CD4-positive, alpha-beta memory T cell (primary cell): ENCODE measurements at regions of chr17 and their contacts with region 1.

Region 1: DNA sequence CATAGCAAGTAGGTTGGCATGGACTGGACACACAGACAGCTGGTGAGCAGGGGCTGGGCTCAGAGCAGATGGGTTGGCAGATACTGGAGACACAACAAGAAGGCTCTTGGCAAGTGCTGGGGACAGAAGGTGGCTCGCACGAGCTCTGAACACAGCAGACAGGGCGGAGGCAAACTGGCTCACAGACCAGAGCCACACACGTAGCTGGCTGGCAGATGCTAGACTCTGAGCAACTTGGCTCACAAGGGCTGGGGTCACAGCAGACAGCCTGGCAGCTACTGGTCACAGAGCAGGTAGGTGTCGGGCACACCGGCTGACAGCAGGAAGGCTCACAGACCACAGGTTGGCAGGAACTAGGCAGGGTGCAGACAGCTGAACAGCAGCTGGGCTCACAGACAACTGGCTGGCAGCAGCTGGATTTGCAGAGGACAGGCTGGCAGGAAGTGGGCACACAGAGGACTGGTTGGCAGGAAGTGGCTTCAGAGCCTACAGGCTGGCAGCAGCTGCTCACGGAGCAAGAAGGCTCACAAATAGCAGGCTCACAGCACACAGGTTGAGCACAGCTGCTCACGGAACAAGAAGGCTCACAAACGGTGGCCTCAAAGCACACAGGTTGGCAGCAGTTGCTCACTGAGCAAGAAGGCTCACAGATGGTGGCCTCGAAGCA is 725 bp downstream of the KRTAP16-1 start:
- DNase-seq: peak; percentile 88 to 95 (median 92)
- H3K4me3 ChIP-seq: peak overlapping the region in 1 of 2 donors; percentile 41
- H3K4me3 Mint-ChIP-seq: peak overlapping the region; percentile 65 to 82 (median 78)
- H3K27ac ChIP-seq: peak overlapping the region; percentile 62
- H3K27ac Mint-ChIP-seq: peak overlapping the region; percentile 96 to 98 (median 97)
- H3K4me1 ChIP-seq: peaks cover 59% of the 10 kb centered on the region
- H3K4me1 Mint-ChIP-seq: peaks cover 54 to 63% (median 58%) of the 10 kb centered on the region in 4 donors
- H3K27me3 ChIP-seq: no peaks in the 10 kb centered on the region
- H3K27me3 Mint-ChIP-seq: no peaks in the 10 kb centered on the region

Region 2: GRCh38 chr17:41116297-41116696 is 192.1 kb before region 1 on chr17:
- CTCF ChIA-PET with region 1: interaction called, 6 read pairs
- POLR2A ChIA-PET with region 1: interaction called, 11 read pairs
- intact Hi-C with region 1: no loop called
- DNase-seq: no peak
- H3K4me3 ChIP-seq: no peak overlapping the region
- H3K4me3 Mint-ChIP-seq: no peak overlapping the region
- H3K27ac ChIP-seq: no peak overlapping the region
- H3K27ac Mint-ChIP-seq: peak overlapping the region in 1 of 7 donors; percentile 79
- H3K4me1 ChIP-seq: peaks cover 15% of the 10 kb centered on the region
- H3K4me1 Mint-ChIP-seq: peaks cover 2 to 29% (median 16%) of the 10 kb centered on the region in 4 donors
- H3K27me3 ChIP-seq: no peaks in the 10 kb centered on the region
- H3K27me3 Mint-ChIP-seq: peaks cover 4% of the 10 kb centered on the region in 2 donors

Region 3: GRCh38 chr17:41131979-41132378 is 176.4 kb before region 1 on chr17:
- CTCF ChIA-PET with region 1: interaction called, 5 read pairs
- POLR2A ChIA-PET with region 1: interaction called, 14 read pairs
- intact Hi-C with region 1: loop called (anchors 5 kb)
- DNase-seq: no peak
- H3K4me3 ChIP-seq: no peak overlapping the region
- H3K4me3 Mint-ChIP-seq: peak overlapping the region in 2 of 8 donors; percentile 14 to 19
- H3K27ac ChIP-seq: no peak overlapping the region
- H3K27ac Mint-ChIP-seq: peak overlapping the region in 2 of 7 donors; percentile 54 to 80
- H3K4me1 ChIP-seq: peaks cover 22% of the 10 kb centered on the region
- H3K4me1 Mint-ChIP-seq: peaks cover 0 to 66% (median 32%) of the 10 kb centered on the region in 4 donors
- H3K27me3 ChIP-seq: no peaks in the 10 kb centered on the region
- H3K27me3 Mint-ChIP-seq: no peaks in the 10 kb centered on the region

Region 4: GRCh38 chr17:41264599-41264998 is 43.8 kb before region 1 on chr17:
- CTCF ChIA-PET with region 1: no interaction called
- POLR2A ChIA-PET with region 1: no interaction called
- intact Hi-C with region 1: loop called (anchors 5 kb)
- DNase-seq: no peak
- H3K4me3 ChIP-seq: no peak overlapping the region
- H3K4me3 Mint-ChIP-seq: no peak overlapping the region
- H3K27ac ChIP-seq: no peak overlapping the region
- H3K27ac Mint-ChIP-seq: peak overlapping the region in 1 of 7 donors; percentile 1
- H3K4me1 ChIP-seq: no peaks in the 10 kb centered on the region
- H3K4me1 Mint-ChIP-seq: peaks cover 10 to 30% (median 15%) of the 10 kb centered on the region in 4 donors
- H3K27me3 ChIP-seq: no peaks in the 10 kb centered on the region
- H3K27me3 Mint-ChIP-seq: peaks cover 20 to 27% of the 10 kb centered on the region in 2 donors

Region 5: DNA sequence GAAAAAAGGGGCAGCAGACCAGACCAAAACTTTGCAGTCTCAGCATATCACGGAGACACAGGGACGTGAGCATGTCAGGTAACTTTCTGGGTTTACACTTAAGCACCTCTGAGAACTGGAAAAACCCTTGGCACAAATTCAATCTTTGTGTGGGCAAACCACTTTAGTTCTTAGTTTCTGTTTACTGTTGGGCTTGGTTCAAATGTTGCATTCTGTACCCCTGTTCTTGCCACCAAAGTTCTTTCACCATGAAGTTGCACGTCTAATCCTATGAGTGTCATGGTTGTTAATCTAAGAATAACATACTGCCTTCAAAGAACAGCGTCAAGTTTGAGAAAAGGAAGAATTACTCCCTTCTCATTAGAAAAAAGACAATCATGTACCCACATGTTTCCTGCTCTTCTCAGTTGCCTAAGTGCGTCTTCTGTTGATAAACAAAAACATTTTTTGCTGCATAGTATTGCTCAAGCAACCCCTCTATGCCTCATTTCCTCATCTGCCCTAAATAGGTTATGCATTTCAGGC is 30.6 kb after region 1 on chr17:
- CTCF ChIA-PET with region 1: interaction called, 23 read pairs
- POLR2A ChIA-PET with region 1: interaction called, 75 read pairs
- intact Hi-C with region 1: loop called (anchors 1 kb)
- DNase-seq: peak; percentile 87 to 94 (median 91)
- H3K4me3 ChIP-seq: no peak overlapping the region
- H3K4me3 Mint-ChIP-seq: peak overlapping the region; percentile 49 to 80 (median 69)
- H3K27ac ChIP-seq: peak overlapping the region; percentile 72
- H3K27ac Mint-ChIP-seq: peak overlapping the region; percentile 95 to 100 (median 99)
- H3K4me1 ChIP-seq: peaks cover 100% of the 10 kb centered on the region
- H3K4me1 Mint-ChIP-seq: peaks cover 71 to 97% (median 86%) of the 10 kb centered on the region in 4 donors
- H3K27me3 ChIP-seq: no peaks in the 10 kb centered on the region
- H3K27me3 Mint-ChIP-seq: no peaks in the 10 kb centered on the region